AG04450 (cell line): ENCODE measurements at regions of chr10 and their contacts with region 1.

Region 1: DNA sequence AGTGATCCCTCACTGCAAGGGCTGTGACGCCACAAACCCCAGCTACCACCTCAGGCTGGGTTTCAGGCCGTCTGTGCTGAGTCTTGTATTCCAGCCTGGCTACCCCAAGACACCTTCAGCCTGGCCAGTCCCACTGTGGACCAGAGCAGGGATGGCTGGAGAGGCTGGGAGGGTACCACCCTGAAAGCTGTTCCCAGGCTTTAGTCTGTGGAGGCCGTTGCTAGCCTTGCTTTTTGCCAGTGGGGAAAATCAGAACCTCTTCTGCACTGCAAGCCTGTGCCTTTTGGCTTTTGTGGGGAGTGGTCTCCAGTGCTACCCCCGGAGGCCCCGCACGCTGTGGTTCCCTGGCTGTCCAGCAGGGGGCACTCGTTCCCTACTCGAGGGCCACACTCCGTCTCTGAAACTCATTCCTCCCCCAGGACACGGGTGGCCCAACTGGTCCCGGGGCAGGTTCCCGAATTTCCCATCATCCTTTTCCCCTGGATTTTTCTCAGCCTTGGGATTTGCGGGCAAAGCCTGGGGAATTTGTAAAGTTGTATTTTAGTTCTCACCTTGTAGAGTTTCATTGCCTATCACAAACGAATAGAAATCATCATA is 128.4 kb upstream of the BTBD16 start:
- DNase-seq: no peak
- H3K4me3 ChIP-seq: no peak overlapping the region
- H3K27ac ChIP-seq: peak overlapping the region; percentile 31
- H3K27me3 ChIP-seq: no peaks in the 10 kb centered on the region
- CTCF ChIP-seq: peak; percentile 90

Region 2: DNA sequence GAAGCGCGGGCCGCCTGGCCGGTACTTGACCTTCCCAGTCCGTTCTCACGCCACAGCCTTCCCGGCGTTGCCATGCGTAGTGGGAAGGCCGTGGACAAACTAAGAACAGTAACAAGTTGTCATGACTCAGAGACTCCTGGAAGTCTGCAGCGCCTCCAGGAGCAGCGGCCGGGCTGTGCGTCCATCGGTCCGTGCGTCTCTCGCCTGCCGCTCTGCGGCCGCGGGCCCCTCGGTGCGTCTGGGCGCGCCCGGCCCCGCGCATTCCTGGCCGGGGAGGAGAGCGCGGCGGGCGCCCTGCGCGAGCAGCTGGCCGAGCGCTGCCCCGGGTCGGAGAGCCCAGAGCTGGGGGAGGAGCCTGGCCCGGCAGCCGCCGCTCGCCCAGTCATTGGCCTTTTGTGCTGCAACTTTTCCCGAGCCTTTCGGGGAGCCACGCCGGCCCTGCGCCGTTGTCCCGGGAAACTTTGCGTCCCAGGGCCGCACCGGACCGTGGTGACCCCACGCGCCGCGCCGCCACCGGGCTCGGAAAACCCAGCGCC is 30.0 kb before region 1 on chr10:
- CTCF ChIA-PET with region 1: interaction called, 12 read pairs
- POLR2A ChIA-PET with region 1: interaction called, 10 read pairs
- DNase-seq: peak; percentile 87
- H3K4me3 ChIP-seq: peak overlapping the region; percentile 78
- H3K27ac ChIP-seq: peak overlapping the region; percentile 97
- H3K27me3 ChIP-seq: no peaks in the 10 kb centered on the region
- CTCF ChIP-seq: peak; percentile 57

Region 3: DNA sequence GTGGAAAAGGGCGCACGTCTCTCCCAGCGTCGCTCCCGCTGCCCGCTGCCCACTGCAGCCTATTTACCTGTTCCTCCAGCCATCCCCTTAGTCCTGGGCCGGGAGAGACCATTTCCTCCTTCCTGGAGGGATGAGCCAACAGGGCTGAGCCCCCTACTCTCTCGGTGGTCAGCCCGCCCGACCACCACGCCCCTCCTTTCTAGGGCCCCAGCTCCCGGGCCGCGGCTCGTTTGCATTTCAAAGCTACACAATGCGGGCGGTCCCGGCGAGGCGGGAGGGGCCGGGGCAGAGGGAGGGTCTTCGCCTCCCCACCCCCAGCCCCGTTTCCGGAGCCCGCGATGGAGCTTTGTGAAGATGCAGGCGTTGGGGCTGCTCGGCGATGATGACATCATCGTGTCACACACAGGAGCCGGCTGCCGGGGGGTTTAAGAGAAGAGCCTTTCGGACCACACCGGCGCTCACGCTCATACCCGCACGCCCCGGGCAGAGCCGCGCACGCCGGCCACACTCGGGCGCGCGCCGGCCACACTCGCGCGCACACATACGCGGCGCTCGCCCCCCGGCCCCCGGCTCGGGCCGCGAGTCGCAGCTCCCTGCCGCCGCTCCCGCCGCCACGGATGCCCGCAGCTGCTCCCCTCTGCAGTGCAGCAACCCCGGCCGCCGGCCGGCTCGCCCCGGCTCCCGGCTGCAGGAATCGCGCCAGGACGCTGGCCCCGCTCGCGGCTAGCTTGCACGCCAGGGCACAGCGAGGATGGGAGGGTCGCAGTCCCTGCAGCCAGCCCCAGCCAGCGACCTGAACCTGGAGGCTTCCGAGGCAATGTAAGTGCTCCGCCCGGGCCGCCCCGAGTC is 20.7 kb after region 1 on chr10:
- CTCF ChIA-PET with region 1: interaction called, 14 read pairs
- POLR2A ChIA-PET with region 1: interaction called, 5 read pairs
- DNase-seq: no peak
- H3K4me3 ChIP-seq: peak overlapping the region; percentile 57
- H3K27ac ChIP-seq: no peak overlapping the region
- H3K27me3 ChIP-seq: no peaks in the 10 kb centered on the region
- CTCF ChIP-seq: no peak

Region 4: GRCh38 chr10:122207596-122207995 is 64.9 kb after region 1 on chr10:
- CTCF ChIA-PET with region 1: interaction called, 14 read pairs
- POLR2A ChIA-PET with region 1: no interaction called
- DNase-seq: peak; percentile 36
- H3K4me3 ChIP-seq: no peak overlapping the region
- H3K27ac ChIP-seq: no peak overlapping the region
- H3K27me3 ChIP-seq: no peaks in the 10 kb centered on the region
- CTCF ChIP-seq: no peak